ENCODE measurements at regions of chr20 and their contacts with region 1.

Region 1: DNA sequence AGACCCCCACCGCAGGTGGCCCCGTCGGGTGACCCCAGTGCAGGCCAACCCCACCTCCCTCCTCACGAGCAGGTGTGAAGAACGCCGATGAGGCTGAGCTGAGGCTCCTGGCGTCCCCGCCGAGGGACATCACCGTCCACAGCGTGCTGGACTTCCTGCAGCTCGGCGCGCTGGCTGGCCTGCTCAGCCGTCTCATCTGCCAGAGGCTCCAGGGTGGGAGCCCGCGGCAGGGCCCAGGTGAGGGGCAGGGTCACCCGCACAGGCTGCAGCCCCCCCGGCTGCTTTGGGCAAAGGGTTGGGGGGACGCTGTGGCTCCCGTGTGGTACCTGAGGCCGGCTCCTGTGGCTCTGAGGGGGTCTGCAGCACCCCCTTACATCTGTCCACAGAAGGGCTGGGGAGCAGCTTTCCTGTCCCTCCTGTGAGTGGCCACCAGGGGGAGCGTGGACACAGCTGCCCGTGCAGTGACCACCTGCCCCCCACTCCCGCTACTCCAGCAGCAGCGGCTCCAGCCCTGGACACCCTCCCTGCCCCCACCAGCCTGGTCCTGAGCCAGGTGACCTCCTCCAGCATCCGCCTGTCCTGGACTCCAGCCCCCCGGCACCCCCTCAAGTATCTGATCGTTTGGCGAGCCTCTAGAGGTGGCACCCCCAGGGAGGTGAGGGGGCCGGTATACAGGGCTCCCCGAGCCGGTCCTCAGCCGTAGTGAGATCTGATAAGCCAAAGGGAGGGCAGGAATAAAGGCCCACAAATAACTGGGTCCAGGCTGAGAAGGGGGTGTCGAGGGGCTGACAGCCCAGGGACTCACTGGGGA is 16.5 kb downstream of the COL20A1 start:
- DNase-seq: peak in 1 of 3 donors; percentile 37
- H3K4me3 ChIP-seq: no peak overlapping the region
- H3K4me3 Mint-ChIP-seq: no peak overlapping the region
- H3K27ac ChIP-seq: no peak overlapping the region
- H3K27ac Mint-ChIP-seq: no peak overlapping the region
- H3K4me1 ChIP-seq: no peaks in the 10 kb centered on the region
- H3K4me1 Mint-ChIP-seq: no peaks in the 10 kb centered on the region
- H3K27me3 ChIP-seq: no peaks in the 10 kb centered on the region
- H3K27me3 Mint-ChIP-seq: peaks cover 0 to 2% (median 2%) of the 10 kb centered on the region in 3 donors
- CTCF ChIP-seq: peak; percentile 85

Region 2: DNA sequence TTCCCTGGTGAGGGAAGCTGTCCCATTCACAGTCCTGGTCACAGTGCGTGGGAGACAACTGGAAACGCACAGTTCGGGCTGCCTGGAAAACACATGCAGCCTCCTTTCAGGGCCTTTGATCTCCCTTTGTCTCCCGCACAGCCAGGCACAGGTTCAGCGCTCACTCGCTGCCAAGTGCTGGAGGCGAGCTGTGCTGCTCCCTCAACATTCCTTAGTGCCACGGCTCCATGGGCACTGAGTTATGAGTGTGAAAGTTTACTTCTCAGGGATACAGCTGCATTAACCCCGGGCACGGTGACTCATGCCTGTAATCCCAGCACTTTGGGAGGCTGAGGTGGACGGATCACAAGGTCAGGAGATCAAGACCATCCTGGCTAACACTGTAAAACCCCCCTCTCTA is 102.6 kb before region 1 on chr20:
- intact Hi-C with region 1: no loop called
- DNase-seq: no peak
- H3K4me3 ChIP-seq: no peak overlapping the region
- H3K4me3 Mint-ChIP-seq: no peak overlapping the region
- H3K27ac ChIP-seq: peak overlapping the region in 1 of 2 donors; percentile 14
- H3K27ac Mint-ChIP-seq: no peak overlapping the region
- H3K4me1 ChIP-seq: no peaks in the 10 kb centered on the region
- H3K4me1 Mint-ChIP-seq: peaks cover under 1% of the 10 kb centered on the region
- H3K27me3 ChIP-seq: no peaks in the 10 kb centered on the region
- H3K27me3 Mint-ChIP-seq: peaks cover 0 to 2% (median 0%) of the 10 kb centered on the region in 3 donors
- CTCF ChIP-seq: no peak

Region 3: DNA sequence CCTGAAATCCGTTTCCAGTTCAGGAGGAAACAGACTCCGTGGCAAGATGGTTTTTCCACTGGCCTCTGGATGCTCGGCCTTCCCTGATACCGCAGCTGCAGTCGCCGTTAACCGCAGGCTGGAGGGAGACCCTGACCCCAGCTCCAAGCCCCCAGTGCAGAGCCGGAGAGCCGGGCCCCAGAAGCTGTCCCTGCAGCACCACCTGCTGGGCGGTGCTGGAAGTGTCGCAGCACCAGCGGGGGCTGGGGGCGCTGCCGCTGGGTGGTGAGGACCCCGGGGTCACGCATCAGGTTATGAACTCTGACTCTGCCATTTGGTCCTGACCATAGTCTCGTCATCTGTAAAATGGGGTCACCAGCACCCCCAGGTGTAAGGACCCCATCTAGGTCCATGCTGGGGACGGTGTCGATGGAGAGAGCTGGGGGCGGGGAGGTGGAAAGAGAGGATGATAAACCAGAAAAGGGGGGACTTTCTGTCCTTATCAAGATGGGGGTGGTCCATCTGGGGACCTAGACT is 72.4 kb after region 1 on chr20:
- intact Hi-C with region 1: loop called in 1 of 2 experiments (anchors 2 kb)
- DNase-seq: peak in 2 of 3 donors; percentile 4 to 13
- H3K4me3 ChIP-seq: no peak overlapping the region
- H3K4me3 Mint-ChIP-seq: no peak overlapping the region
- H3K27ac ChIP-seq: no peak overlapping the region
- H3K27ac Mint-ChIP-seq: no peak overlapping the region
- H3K4me1 ChIP-seq: no peaks in the 10 kb centered on the region
- H3K4me1 Mint-ChIP-seq: no peaks in the 10 kb centered on the region
- H3K27me3 ChIP-seq: peaks cover 0 to 15% of the 10 kb centered on the region in 2 donors
- H3K27me3 Mint-ChIP-seq: peaks cover 12 to 37% (median 24%) of the 10 kb centered on the region in 3 donors
- CTCF ChIP-seq: peak; percentile 96

Measured in CD14-positive monocyte (primary cell).